BJ (cell line): ENCODE measurements at regions of chr6 and their contacts with region 1.

Region 1: GRCh38 chr6:33771146-33772081 is 17.5 kb downstream of the LEMD2 start:
- DNase-seq: peak; percentile 96
- H3K4me3 ChIP-seq: no peak overlapping the region
- H3K27me3 ChIP-seq: no peaks in the 10 kb centered on the region
- CTCF ChIP-seq: peak; percentile 75

Region 2: GRCh38 chr6:33744001-33744848 is 27.2 kb before region 1 on chr6:
- CTCF ChIA-PET with region 1: interaction called, 567 read pairs
- POLR2A ChIA-PET with region 1: no interaction called
- DNase-seq: no peak
- H3K4me3 ChIP-seq: no peak overlapping the region
- H3K27me3 ChIP-seq: no peaks in the 10 kb centered on the region
- CTCF ChIP-seq: peak; percentile 93

Region 3: GRCh38 chr6:33788694-33789549 is 17.5 kb after region 1 on chr6 and contains the start of gene LEMD2:
- CTCF ChIA-PET with region 1: interaction called, 36 read pairs
- POLR2A ChIA-PET with region 1: no interaction called
- DNase-seq: peak; percentile 63
- H3K4me3 ChIP-seq: peak within 1 kb of the TSS; percentile 58
- H3K27me3 ChIP-seq: peaks cover 1% of the 10 kb centered on the region; the same call in 1 of the 2 replicates
- CTCF ChIP-seq: no peak
- polyA plus RNA-seq, gene LEMD2: 59.8 and 62.2 TPM in 2 replicates

Region 4: GRCh38 chr6:33840048-33840926 is 68.9 kb after region 1 on chr6:
- CTCF ChIA-PET with region 1: interaction called, 12 read pairs
- POLR2A ChIA-PET with region 1: no interaction called
- DNase-seq: peak; percentile 92
- H3K4me3 ChIP-seq: no peak overlapping the region
- H3K27me3 ChIP-seq: no peaks in the 10 kb centered on the region
- CTCF ChIP-seq: no peak

Region 5: DNA sequence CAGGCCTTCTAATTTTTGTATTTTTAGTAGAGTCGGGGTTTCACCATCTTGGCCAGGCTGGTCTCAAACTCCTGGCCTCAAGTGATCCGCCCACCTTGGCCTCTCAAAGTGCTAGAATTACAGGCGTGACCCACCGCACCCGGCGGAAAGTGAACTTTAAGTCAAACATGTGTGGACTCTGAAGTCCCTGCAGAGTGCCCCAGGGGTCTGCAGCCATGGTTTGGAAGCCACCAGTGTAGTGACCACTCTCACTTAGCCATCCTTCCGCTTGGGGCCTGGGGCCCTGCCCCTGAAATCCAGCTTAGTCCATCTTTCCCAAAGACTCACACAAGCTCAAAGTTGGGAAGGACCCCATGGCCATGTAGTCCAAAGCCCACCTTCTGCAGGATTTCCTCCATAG is 210.0 kb after region 1 on chr6:
- CTCF ChIA-PET with region 1: no interaction called
- POLR2A ChIA-PET with region 1: no interaction called
- DNase-seq: no peak
- H3K4me3 ChIP-seq: no peak overlapping the region
- H3K27me3 ChIP-seq: peaks cover 11% of the 10 kb centered on the region
- CTCF ChIP-seq: no peak

Region 6: DNA sequence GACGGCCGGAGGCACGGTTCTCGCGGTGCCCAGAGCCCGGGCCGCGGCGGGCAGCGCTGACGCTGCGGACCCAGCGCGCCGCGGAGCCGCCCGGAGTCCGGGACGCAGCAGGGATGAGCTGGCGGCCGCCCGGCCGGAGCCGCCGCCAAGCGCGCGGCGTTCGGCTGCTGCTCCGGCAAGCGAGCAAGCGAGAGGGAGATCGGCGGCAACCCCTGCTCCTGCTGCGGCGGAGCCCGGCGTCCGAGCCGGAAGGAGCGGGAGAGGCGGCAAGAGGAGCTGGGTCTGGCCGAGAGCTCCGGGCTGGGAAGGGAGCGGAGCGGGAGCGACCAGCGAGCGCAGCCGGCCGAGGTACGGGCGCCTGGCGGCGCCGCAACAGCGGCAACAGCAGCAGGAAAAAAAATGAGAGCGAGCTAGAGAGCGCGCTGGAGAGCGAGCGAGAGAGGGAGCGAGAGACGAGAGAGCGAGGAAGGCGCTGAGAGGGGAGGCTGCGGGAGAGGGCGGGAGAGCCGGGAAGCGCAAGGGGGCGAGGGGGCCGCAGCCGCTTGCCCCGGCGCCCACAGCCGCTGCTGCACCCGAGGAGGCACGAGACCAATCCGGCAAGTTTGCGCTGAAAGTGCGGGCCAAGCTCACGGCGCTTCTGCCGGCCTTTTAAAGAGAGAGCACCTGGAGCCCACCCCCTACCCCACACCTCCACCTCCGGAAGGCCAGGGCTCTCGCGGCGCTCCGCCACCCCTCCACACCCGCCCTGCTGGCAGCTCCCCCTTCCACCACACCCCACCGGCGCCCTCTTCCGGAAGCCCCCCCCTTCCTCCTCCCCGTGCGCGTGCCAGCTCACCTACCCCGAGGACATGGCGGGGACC is 374.0 kb after region 1 on chr6:
- CTCF ChIA-PET with region 1: interaction called, 10 read pairs
- POLR2A ChIA-PET with region 1: no interaction called
- DNase-seq: no peak
- H3K4me3 ChIP-seq: peak overlapping the region; percentile 39
- H3K27me3 ChIP-seq: peaks cover 55% of the 10 kb centered on the region
- CTCF ChIP-seq: no peak

Region 7: DNA sequence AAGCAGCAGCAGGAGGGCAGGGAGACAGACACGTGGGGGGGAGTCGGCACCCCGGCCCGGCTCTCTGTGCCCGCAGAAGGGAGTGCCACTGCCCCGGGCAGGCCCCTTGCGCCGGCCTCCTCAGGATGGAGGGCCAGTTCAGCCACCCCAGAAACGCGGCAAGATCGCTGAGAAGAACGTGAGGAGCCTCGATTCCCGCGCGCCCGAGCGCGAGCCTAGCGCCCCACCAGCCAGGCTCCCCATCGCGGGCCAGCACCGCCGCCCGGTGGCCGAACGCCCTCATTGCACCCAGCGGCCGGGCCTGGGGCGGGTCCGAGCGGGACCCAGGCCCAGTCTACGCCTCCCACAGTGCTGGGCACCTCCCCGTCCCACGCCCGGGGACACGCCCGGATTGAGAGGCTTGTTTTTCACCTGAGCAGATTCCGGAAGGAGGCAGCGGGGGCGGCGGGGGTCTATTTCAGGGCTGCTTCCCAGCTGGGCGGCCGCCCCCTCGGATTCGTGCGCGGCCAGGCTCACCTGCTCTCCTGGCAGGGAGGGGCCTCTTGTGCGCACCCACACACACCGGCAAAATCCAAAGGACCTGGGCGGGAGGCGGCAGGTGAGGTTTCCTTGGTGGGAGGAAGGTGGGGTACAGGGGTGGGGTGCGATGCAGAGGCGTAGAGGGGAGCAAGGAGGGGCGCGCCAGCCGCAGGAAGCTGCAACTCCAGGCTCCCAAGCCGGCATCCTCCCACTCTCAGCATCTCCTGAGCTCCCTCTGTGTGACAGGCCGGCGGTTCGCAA is 383.4 kb after region 1 on chr6:
- CTCF ChIA-PET with region 1: interaction called, 74 read pairs
- POLR2A ChIA-PET with region 1: no interaction called
- DNase-seq: no peak
- H3K4me3 ChIP-seq: peak overlapping the region; percentile 20; the same call in 1 of the 2 replicates
- H3K27me3 ChIP-seq: peaks cover 31% of the 10 kb centered on the region
- CTCF ChIP-seq: peak; percentile 73